ENCODE measurements at regions of chr7 and their contacts with region 1.

Region 1: DNA sequence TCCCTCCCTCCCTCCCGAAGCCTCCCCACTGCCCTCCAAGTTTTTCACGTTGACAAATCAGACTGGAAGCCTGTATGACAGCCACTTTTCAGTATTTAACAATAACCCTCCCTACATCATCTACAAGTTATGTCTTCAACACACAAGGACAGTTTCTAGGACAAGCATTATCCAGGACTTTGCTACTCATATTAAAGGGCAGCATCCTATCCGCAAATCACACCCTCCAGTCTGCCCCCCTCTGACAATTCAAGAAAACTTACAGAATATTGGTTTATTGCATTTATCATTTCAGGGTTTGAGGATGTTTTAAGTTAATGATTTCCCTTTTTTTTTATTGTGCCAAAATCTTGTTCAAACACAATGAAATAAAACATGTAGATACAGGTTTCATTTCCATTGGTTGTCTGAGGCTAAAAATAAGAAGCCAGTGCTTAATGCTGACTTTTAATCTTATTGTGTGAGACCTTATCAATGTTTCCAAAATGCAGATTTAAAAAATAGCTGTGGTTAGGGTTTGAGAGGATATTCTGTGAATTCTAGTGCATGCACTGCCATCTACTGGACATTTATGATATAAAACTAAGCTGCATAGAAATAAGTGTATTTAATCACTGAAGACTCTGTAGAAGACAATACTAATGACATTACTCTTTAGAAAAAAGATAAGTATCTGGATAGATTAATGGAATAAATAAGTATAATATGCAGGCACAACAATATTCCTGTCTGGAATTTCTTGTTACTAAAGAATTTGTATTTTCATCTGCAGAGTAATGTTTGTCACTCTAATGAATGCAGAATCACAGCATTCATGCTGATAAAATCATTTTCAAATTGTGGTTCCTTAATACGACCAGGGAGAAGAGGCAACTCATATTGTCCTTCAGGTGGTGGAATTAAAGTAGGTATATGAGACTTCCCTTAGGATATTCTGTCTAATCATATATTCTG is 64.1 kb downstream of the CAV1 start:
- DNase-seq: no peak
- CTCF ChIP-seq: peak; percentile 66

Region 2: DNA sequence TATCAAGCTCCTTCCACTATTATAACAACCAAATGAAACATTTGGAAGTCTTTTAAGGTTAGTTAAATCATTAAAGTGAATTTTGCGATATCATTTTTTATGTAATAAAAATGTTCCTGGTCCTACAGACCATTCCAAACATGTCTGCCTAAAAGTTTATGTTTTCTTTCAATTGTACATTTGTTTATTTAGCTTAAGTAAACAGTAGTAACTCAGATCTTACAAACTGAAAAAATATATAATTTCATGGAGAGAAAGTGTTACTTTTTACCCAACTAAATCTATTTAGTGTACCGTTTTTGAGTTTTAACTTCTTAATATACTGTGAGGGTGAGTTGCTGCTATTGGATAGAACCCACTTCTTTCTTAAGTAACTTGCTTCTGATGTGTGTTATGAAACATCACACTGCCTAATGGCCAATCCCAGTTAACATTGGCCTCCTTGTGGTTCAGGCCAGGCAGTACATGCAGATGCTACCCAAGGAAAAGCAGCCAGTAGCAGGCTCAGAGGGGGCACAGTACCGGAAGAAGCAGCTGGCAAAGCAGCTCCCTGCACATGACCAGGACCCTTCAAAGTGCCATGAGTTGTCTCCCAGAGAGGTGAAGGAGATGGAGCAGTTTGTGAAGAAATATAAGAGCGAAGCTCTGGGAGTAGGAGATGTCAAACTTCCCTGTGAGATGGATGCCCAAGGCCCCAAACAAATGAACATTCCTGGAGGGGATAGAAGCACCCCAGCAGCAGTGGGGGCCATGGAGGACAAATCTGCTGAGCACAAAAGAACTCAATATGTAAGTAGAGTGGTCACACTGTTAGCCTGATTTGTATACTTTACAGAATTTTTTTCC is 339.0 kb before region 1 on chr7:
- CTCF ChIA-PET with region 1: interaction called, 116 read pairs
- POLR2A ChIA-PET with region 1: no interaction called
- DNase-seq: no peak
- CTCF ChIP-seq: peak; percentile 12

Region 3: DNA sequence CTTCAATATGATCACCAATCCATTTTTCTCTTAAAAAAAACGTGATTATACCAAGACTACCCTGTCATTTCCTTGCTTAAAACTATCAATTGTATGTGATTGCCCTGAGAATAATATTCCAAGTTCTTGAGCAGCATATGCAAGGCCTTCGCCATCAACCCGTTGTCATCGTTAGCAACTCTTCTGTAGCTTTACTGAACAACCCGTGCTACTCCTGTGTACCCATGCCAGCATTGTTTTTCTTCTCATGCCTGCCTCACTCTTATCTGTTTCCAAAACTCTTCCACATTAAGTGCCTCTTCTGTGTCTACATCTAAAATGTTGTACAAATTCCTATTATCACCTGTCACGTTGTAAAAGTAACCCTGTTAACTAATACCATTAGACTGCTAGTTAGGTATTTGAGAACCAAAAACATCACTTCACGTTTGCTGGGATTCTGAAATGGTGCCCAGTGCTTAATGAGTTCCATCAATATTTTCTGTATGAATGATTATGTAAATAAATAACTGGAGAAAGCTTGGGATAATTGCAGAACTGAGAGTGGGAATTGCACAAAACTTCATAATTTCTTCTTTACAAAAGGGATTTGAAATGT is 78.8 kb before region 1 on chr7:
- CTCF ChIA-PET with region 1: no interaction called
- POLR2A ChIA-PET with region 1: no interaction called
- DNase-seq: no peak
- CTCF ChIP-seq: no peak

Region 4: GRCh38 chr7:116576350-116577319 is 12.3 kb before region 1 on chr7:
- CTCF ChIA-PET with region 1: interaction called, 26 read pairs
- POLR2A ChIA-PET with region 1: no interaction called
- DNase-seq: no peak
- CTCF ChIP-seq: no peak

Region 5: DNA sequence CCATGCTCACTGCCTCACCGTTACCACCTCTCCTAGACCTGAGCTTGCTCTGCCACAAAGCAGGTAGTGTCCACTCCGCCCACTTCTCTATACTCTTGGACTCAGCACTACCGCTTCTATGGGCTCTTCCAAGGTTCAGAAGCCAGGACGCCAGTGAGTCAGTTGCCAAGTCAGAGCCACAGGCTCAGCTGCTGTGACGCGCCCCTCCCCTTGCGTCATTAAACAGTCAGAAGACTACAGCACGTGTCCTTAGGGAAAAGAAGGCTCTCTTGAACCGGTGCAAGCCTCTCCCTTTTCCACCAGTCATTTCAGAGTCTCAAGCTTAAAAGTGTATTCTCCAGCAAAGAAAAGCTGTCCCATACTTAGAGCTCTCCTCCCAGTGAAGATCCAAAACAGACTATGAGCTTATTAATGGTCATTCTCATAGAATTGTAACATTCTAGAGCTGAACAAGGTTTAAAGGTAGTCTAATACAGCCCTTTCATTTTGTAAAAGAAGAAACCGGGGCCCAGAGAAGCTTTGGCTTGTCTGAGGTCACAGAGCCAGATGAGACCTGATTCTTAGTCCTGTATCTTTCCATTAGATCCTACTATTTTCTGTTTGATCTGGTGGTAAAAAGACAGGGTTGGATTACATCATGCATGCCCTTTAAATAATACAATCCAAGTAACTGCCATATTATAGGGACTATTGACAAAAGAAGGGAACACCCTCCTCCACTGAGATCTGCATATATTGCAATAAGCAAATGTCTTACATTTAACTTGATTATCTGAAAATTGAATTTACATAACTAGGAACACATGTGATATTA is 42.2 kb after region 1 on chr7:
- CTCF ChIA-PET with region 1: interaction called, 18 read pairs
- POLR2A ChIA-PET with region 1: no interaction called
- DNase-seq: peak; percentile 12
- CTCF ChIP-seq: no peak

Region 6: GRCh38 chr7:116809636-116810266 is 220.8 kb after region 1 on chr7:
- CTCF ChIA-PET with region 1: interaction called, 20 read pairs
- POLR2A ChIA-PET with region 1: no interaction called
- DNase-seq: peak; percentile 40
- CTCF ChIP-seq: peak; percentile 52

Region 7: DNA sequence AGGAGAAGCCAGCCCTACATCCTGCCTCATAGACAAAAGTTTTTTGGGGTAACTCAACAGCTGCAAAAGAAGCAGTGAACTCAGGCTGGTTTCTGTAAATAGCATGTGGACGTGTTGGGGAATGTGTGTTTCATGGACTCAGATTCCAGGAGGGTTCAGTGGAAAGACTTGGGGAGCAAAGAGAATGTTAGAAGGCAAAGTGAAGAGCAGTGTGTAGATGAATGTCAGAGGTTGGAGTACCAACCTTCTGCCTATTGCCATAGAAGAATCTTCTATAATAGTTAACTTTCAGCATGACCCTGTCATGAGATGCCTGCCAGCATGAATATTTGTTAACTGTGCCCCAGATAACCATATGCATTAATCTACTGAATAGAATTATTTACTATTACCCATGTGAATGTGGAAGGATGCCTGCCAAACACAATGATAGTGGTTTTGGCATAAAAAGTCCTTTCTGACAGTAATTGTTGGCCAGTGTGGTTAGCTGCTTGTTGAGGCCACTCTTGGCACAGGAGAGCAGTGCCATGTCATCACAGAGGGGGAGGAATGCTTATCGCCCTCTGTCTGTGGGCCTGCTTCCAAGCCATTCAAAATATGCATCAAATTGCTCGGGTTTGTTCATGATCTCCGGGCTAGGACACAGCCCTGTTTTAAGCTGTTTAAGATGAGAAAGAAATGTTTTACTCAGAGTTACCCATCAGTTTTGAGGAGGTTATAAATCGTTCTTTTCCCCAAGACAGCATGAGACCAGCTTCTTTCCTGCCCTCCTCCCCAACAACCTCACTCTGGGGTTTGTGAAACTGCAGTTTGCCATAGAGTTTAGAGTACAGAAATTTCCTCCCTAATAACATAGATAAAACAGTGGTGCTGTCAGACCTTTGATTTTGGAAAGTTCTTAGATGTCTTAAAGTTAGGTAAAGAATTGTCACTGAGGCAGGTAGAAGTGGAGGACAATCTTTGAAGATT is 568.6 kb after region 1 on chr7:
- CTCF ChIA-PET with region 1: no interaction called
- POLR2A ChIA-PET with region 1: no interaction called
- DNase-seq: no peak
- CTCF ChIP-seq: no peak

Measured in GM10248 (cell line).